GM23248 (cell line): ENCODE measurements at regions of chr12 and their contacts with region 1.

Region 1: DNA sequence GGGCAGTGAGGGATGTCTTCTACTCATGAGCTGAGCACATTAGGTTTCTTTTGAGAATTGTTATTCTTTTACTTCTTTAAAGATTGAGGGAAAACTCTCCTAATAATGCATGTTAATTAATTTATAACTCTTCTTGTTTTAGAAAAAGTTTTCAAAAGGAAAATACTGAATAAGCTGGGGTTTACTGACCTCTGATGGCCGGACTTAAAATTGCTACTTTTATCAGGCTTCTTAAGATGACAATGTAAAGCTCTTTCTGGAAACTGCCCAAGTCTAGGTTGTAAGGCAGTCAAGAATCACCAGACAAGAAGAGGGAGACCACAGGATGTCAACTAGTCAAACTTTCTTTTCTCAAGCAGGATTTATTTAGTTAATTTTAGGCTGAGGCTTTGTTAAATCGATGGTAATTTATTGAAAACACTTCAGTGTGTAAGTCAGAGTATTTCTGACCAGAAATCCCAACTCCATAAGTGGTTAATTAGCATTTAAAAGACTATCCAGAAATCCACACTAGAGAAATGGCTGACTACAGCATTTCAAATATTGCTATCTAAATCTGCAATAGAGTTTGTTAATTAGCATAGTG is 82.1 kb downstream of the AVPR1A start:
- DNase-seq: peak; percentile 75
- H3K4me3 ChIP-seq: no peak overlapping the region
- H3K27ac ChIP-seq: no peak overlapping the region
- H3K4me1 ChIP-seq: no peaks in the 10 kb centered on the region
- H3K27me3 ChIP-seq: no peaks in the 10 kb centered on the region

Region 2: DNA sequence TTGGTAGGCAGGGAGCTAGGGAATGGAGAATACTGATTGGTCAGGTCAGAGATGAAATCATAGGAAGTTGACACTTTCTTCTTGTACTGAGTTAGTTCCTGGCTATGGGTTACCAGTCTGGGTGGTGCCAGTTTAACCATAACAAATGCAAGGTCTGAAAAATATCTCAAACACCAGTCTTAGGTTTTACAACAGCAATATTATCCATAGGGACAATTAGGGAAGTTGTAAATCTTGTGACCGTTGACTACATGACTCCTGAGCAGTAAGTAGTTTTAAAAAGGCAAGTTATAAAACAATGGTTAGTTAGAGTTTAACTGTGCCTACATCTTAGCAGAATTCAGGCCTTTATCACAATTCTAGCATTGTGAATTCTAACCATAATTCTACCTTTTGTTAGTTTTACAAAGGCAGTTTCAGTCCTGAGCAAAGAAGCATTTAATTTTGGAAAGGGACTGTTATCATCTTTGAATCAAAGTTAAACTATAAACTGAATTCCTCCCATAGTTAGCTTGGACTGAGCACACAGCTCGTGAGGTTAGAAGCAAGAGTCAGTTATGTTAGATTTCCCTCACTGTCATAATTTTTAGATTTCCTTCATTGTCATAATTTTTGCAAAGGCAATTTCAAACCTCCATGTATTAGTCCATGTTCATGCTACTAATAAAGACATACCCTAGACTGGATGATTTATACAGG is 622.0 kb before region 1 on chr12:
- in situ Hi-C with region 1: loop called (anchors 10 kb)
- DNase-seq: no peak
- H3K4me3 ChIP-seq: no peak overlapping the region
- H3K27ac ChIP-seq: no peak overlapping the region
- H3K4me1 ChIP-seq: no peaks in the 10 kb centered on the region
- H3K27me3 ChIP-seq: no peaks in the 10 kb centered on the region

Region 3: DNA sequence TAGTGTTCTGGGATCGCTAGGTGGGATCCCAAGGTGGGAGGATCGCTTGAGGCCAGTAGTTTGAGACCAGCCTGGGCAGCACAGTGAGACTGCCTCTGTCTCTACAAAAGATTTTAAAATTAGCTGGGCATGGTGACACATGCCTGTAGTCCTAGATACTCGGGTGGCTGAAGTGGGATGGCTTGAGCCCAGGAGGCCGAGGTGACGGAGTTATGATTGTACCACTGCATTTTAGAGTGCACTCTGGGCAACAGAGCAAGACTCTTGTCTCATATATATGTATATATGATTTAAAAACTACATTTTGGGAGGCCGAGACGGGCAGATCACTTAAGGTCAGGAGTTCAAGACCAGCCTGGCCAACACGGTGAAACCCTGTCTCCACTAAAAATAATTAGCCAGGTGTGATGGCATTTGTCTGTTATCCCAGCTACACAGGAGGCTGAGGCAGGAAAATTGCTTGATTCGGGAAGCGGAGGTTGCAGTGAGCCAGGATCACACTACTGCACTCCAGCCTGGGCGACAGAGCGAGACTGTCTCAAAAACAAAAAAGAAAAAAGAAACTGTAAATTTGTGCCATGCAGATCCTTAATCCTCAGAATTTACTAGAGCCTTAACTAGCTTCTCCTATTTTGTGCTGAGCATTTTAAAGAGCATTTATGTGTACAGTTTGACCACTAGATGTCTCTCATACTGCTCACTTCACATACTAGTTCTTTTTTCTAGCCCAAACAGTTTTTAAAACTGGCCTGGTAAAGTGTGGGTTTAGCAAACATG is 487.5 kb before region 1 on chr12:
- in situ Hi-C with region 1: loop called (anchors 25 kb)
- DNase-seq: peak; percentile 74
- H3K4me3 ChIP-seq: no peak overlapping the region
- H3K27ac ChIP-seq: no peak overlapping the region
- H3K4me1 ChIP-seq: peaks cover 6% of the 10 kb centered on the region; the same call in 1 of the 2 replicates
- H3K27me3 ChIP-seq: no peaks in the 10 kb centered on the region

Region 4: GRCh38 chr12:62813031-62813829 is 255.7 kb before region 1 on chr12:
- in situ Hi-C with region 1: loop called (anchors 10 kb)
- DNase-seq: peak; percentile 88
- H3K4me3 ChIP-seq: peak overlapping the region; percentile 61
- H3K27ac ChIP-seq: no peak overlapping the region
- H3K4me1 ChIP-seq: no peaks in the 10 kb centered on the region; the same call in 1 of the 2 replicates
- H3K27me3 ChIP-seq: peaks cover 19% of the 10 kb centered on the region

Region 5: DNA sequence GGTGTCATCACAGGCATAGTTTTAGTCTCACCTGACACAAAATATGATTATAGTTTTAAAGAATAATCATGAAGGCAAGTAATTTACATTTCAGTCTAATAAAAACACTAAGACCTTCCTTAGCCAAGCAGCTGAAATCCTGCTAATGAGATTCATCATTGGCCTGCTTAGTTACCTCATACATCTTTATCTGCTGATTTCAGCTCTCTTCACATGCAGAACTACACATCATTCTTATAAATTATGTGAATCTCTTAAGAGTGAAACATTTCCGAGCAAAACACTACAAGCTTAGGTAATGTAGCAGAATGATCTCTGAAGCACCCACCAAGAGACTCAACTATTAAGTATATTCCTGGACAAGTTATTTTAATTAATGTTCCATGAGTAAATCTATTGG is 401.2 kb after region 1 on chr12:
- in situ Hi-C with region 1: no loop called
- DNase-seq: no peak
- H3K4me3 ChIP-seq: no peak overlapping the region
- H3K27ac ChIP-seq: no peak overlapping the region
- H3K4me1 ChIP-seq: no peaks in the 10 kb centered on the region
- H3K27me3 ChIP-seq: no peaks in the 10 kb centered on the region